ENCODE measurements at regions of chr10 and their contacts with region 1.

Region 1: GRCh38 chr10:127853868-127854768 is 38.6 kb downstream of the CLRN3 start:
- DNase-seq: no peak
- H3K4me3 ChIP-seq: no peak overlapping the region
- H3K27ac ChIP-seq: no peak overlapping the region
- H3K4me1 ChIP-seq: peaks cover 0 to 7% (median 3%) of the 10 kb centered on the region in 4 donors
- H3K27me3 ChIP-seq: peaks cover 0 to 18% (median 0%) of the 10 kb centered on the region in 4 donors
- CTCF ChIP-seq: peak; percentile 63 to 78 (median 73)
- EP300 ChIP-seq: no peak
- POLR2A ChIP-seq: no peak

Region 2: DNA sequence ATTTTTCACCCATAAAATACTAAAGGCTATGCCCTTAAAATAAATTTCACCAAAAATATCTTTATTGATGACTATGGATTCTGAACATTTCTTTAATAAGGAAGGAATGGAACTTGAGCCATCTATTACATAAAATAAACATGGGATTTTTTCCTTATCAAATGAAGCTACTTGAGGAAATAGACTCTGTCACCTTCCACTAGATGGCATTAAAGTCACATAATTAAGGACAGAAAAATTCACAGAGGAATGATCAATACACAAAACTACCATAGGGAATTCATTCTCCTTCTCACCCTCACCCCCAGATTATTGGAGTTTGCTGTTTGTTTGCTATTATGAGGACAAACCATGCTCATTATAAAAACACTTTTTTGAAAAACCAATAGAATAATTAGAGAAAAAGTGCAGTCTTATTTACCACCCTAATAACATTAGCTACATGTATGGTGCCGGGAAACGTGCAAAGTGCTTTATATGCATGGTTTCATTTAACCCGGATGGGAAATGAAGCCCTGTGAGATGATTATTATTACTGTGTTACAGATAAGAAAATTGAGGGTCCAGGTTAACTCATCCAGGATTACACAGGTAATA is 138.2 kb before region 1 on chr10:
- intact Hi-C with region 1: loop called (anchors 5 kb)
- DNase-seq: no peak
- H3K4me3 ChIP-seq: no peak overlapping the region
- H3K27ac ChIP-seq: no peak overlapping the region
- H3K4me1 ChIP-seq: no peaks in the 10 kb centered on the region
- H3K27me3 ChIP-seq: no peaks in the 10 kb centered on the region
- CTCF ChIP-seq: peak; percentile 21 to 27 (median 26)
- EP300 ChIP-seq: no peak
- POLR2A ChIP-seq: no peak

Region 3: DNA sequence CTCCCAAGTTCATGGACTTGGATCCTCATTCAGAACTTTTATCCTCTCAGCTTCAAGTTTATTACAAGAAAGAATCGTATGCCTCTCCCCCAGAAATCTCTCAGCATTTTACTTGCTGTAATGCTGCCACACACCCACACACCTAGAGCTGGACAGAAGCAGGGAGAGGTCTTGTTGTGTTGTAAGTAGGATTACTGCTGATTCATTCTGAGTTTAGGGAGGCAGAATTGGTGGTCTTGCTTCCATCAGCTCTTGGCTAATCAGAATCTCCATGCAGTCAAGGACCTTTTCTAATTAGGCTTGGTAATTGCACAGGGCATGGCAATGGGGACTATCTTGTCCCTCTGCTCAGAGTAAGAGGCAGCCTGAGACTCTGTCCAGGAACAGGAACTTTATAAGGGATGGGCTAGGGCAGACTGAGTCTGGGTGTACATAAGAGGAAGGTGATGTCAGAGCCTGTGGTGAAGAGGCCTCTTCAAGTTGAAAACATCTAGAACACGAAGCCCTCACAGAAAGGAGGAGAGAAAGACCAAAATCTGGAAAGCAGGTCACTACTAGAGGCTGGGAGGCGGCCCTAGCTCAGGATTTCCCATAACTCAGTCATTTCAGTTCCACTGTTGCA is 45.8 kb after region 1 on chr10:
- intact Hi-C with region 1: no loop called
- DNase-seq: no peak
- H3K4me3 ChIP-seq: no peak overlapping the region
- H3K27ac ChIP-seq: no peak overlapping the region
- H3K4me1 ChIP-seq: no peaks in the 10 kb centered on the region
- H3K27me3 ChIP-seq: peaks cover 0 to 11% (median 0%) of the 10 kb centered on the region in 4 donors
- CTCF ChIP-seq: no peak
- EP300 ChIP-seq: no peak
- POLR2A ChIP-seq: no peak